ENCODE measurements at regions of chr2 and their contacts with region 1.

Region 1: DNA sequence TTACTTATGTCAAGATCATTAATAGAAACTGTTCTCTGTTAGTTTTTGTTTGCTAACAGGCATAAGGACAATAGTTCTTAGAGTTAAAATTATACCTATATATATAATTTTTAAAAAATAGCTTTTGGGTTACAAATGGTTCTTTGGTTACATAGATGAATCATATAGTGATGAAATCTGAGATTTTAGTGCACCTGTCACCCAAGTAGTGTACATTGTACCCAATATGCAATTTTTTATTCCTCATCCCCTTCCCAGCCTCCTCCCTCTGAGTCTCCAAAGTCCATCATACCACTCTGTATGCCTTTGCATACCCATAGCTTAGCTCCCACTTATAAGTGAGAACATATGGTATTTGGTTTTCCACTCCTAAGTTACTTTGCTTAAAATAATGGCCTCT is 26.4 kb downstream of the SLC4A1AP start:
- DNase-seq: no peak
- ATAC-seq: no peak

Region 2: DNA sequence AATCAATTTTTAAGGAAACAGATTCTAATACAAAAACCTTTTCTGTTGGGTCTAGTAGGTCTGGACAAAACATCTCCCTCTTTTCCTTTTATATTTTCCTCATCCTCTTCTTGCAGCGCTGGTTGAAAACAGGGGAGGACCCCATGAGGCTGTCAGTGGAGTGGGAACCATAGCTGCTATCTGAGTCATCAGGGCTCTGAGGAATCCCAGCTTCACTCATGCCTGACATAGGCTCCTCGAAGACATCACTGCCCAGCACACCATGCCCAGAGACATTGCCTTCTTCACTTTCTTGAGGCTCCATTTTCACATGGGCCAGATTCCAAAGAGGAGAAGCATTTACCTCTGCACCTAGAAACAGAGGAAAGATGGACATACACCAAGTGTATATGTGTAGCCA is 36.7 kb before region 1 on chr2:
- intact Hi-C with region 1: no loop called
- DNase-seq: no peak
- ATAC-seq: no peak

Region 3: DNA sequence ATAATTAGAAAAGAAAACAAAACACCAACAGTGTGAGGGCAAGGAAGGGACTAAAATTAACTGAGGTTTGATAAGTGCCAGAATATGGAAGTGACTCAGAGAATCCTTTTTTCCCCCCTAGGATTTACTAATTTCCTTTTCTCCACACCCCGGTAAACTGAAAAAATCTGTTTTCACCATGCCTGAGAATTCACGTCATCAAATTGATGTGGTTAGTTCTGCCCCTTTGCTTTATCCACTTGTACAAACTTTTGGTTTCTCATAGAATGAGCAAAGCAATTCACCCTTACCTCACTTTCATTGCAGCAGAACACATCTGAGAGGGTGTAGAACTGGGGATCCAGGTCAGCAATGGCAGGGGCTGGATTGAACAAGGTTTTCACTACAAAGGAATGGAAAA is 142.3 kb after region 1 on chr2:
- intact Hi-C with region 1: loop called (anchors 5 kb)
- DNase-seq: no peak
- ATAC-seq: no peak

Measured in sciatic nerve (tissue), 2 donors.